ENCODE measurements at regions of chr1 and their contacts with region 1.

Region 1: DNA sequence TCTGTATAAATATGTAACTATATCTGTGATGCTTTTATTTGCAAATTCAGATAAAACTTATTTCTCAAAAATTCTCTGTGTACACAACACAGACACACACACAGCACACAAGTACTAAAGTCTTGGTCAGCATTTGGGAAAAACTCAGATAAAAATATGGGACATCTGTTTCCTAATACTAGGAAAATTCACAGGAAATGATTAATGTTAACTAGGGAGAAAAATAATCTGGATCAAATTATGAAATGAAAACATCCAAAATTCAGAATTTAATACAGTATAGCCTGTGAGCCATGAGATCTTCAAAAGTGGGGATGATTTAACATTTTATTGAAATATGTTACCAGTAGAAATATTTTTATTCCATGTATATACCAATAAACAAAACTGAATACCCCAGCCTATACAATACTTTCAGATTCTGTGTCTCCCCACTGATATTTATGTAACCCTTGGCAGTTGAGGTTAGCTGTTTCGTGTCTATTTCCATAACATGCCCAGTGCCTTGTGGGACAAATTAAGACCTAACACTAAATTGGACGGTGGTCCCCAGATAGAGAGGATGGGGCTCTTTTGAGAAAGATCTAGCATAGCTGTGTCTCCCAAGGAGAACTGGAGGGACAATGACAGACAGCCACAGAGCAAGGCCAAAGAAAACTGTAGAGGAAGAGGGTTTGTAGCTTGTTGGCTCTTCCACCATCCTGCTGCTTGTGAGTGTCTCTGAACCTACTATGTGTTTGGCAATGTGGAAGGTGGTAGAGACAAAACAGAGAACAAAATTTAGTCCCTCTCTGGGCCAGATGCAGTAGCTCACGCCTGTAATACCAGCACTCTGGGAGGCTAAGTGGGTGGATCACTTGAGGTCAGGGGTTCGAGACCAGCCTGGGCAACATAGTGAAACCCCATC is 47.2 kb downstream of the GNG12 start:
- DNase-seq: peak; percentile 83
- H3K4me3 ChIP-seq: no peak overlapping the region
- H3K27ac ChIP-seq: peak overlapping the region in 3 of 4 donors; percentile 8 to 23 (median 15)
- H3K4me1 ChIP-seq: peaks cover 8 to 64% (median 53%) of the 10 kb centered on the region in 4 donors
- H3K27me3 ChIP-seq: no peaks in the 10 kb centered on the region
- CTCF ChIP-seq: no peak
- EP300 ChIP-seq: no peak
- POLR2A ChIP-seq: no peak

Region 2: GRCh38 chr1:67824766-67825165 is 38.7 kb after region 1 on chr1:
- intact Hi-C with region 1: loop called (anchors 5 kb)
- DNase-seq: peak; percentile 60
- H3K4me3 ChIP-seq: no peak overlapping the region
- H3K27ac ChIP-seq: peak overlapping the region in 3 of 4 donors; percentile 32 to 79 (median 61)
- H3K4me1 ChIP-seq: peaks cover 17 to 89% (median 68%) of the 10 kb centered on the region in 4 donors
- H3K27me3 ChIP-seq: no peaks in the 10 kb centered on the region
- CTCF ChIP-seq: no peak
- EP300 ChIP-seq: no peak
- POLR2A ChIP-seq: no peak